MCF 10A (cell line): ENCODE measurements at regions of chr19 and their contacts with region 1.

Region 1: DNA sequence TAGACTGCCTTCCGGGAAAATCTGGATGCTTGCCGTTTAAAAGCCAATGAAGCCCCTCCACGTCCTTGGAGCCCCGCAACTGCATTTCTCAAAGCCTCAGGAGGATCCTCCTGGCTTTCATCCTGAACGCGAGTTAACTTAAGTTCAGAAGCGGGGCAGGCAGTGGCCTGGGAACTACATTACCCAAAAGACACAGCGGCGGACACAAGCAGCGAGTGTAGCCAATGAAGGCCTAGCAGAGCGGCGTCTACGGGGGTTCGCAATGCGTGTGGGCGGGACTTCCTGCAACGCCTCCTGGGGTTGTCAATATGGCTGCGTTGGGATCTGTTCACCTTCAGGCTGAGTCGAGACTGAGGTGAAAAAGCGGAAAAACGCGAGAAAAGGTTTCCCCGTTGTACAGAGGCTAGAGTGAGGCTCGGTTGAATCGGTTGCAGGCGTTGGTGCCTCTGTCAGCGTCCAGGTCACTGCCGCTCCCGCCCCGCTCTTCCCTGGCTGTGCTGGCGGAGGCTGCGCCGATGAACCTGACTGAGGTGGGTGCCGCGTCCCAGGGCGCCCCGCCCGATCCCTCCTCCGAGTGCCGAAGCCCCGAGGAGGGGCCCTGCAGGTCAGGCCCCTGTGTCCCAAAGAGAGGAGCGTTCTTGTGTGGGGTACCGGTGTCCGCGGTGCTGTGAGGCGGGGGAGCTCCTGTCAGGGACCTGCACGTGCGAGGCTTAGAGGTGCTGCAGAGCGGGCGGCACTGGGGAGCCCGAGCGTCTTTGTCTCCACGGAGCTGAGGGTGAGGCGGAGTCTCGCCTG is at the start of gene ZNF17:
- DNase-seq: peak; percentile 96
- H3K4me3 Mint-ChIP-seq: peak within 1 kb of the TSS; percentile 97
- H3K27ac Mint-ChIP-seq: peak within 1 kb of the TSS; percentile 86
- H3K4me1 Mint-ChIP-seq: peaks cover 14% of the 10 kb centered on the region
- H3K27me3 Mint-ChIP-seq: no peaks in the 10 kb centered on the region
- CTCF ChIP-seq: no peak
- total RNA-seq, gene ZNF17: 7.8 and 8.3 TPM in 2 replicates

Region 2: DNA sequence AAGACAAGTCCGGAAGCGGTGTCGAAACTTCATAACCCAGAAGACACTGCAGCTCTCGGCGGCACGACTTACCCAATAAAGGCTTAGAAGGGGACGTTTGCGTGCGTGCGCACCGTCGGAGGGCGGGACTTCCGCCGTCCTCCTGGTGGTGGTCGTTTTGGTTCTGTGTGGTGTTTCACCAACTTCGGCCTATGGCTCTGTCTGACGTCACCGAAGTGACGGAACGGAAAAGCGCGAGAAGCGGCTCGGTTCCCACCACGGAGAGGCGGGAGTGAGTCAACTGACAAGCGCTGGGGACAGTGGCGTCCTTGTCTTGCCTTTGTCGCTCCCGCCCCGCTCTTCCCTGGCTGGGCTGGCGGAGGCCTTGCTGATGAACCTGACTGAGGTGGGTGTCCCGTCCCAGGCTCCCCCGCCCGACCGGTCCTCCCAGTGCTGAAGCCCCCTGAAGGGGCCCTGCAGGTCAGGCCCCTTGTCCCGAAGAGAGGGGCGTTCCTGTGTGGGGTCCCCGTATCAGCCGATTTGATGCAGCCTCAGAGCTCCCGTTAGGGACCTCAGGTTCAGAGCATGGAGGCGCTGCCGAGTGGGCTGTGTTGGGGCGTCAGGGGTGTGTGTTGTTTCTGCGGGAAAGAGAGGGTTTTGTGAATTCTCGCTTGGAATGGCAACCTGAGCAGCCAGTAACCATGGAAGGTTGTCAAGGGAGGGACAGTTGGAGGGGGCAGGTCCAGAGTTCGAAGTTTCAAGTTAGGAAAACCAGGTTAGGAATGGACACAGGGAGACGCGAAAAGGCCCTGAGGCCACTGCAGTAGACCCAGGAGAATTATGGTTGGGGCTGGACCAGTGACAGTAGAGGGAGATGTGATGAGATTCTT is 21.1 kb before region 1 on chr19 and contains the start of gene ZNF548:
- CTCF ChIA-PET with region 1: interaction called, 18 read pairs
- POLR2A ChIA-PET with region 1: interaction called, 14 read pairs
- intact Hi-C with region 1: no loop called
- DNase-seq: peak; percentile 97
- H3K4me3 Mint-ChIP-seq: peak within 1 kb of the TSS; percentile 88
- H3K27ac Mint-ChIP-seq: peak within 1 kb of the TSS; percentile 97
- H3K4me1 Mint-ChIP-seq: peaks cover 13% of the 10 kb centered on the region
- H3K27me3 Mint-ChIP-seq: no peaks in the 10 kb centered on the region
- CTCF ChIP-seq: no peak
- total RNA-seq, gene ZNF548: 23.7 and 40.1 TPM in 2 replicates

Region 3: DNA sequence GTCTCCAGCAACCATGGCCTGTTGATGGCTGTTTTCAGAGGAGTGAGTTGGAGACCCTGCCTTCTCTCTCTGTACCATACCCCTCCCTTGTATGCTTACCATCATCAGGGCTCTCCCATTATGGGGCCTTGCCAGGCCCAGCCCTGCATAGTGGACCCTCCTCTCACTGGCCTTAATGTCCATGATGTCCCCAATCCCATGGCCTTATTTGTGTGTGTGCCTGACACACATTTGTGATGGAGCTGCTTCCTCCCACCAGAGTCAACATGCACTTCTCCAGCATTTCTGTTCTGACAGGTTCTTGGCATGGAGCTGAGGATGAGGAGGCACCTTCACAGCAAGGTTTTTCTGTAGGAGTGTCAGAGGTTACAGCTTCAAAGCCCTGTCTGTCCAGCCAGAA is 12.9 kb before region 1 on chr19:
- CTCF ChIA-PET with region 1: interaction called, 18 read pairs
- POLR2A ChIA-PET with region 1: interaction called, 3 read pairs
- intact Hi-C with region 1: no loop called
- DNase-seq: no peak
- H3K4me3 Mint-ChIP-seq: no peak overlapping the region
- H3K27ac Mint-ChIP-seq: no peak overlapping the region
- H3K4me1 Mint-ChIP-seq: no peaks in the 10 kb centered on the region
- H3K27me3 Mint-ChIP-seq: no peaks in the 10 kb centered on the region
- CTCF ChIP-seq: no peak

Region 4: DNA sequence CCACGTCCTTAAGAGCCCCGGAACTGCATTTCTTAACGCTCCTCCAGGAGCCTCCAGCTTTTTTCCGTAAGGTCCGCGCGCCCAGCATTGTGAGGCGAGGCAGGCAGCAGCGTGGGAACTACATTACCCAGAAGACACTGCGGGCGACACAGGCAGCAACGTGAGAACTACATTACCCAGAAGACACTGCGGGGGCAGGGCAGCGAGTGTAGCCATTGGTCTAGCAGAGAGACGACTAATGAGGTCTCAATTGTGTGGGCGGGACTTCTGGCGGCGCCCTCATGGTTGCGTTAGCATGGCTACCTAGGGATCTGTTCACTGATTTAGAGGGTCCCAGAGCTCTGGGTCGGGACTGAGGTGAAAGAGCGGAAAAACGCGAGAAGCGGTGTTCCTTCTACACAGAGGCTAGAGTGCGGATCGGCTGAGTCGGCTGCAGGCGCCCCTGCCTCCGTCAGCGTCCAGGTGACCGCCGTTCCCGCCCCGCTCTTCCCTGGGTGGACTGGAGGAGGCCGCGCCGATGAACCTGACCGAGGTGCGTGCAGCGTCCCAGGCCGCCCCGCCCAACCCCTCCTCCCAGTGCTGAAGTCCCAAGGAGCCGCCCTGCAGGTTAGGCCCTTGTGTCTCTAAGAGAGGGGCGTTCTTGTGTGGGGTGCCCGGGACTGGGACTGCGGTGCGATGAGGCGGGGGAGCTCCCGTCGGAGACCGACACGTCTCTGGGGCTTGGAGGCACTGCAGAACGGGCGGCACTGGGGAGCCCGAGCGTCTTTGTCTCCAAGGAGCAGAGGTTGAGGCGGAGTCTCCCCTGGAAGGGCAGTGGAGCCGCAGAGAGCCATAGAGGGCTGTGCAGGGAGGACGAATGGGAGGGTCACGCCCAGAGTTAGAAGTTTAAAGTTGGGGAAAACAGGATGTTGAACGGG is 24.2 kb after region 1 on chr19 and contains the start of gene ZNF749:
- CTCF ChIA-PET with region 1: interaction called, 9 read pairs
- POLR2A ChIA-PET with region 1: interaction called, 20 read pairs
- intact Hi-C with region 1: no loop called
- DNase-seq: peak; percentile 99
- H3K4me3 Mint-ChIP-seq: peak within 1 kb of the TSS; percentile 99
- H3K27ac Mint-ChIP-seq: peak within 1 kb of the TSS; percentile 93
- H3K4me1 Mint-ChIP-seq: peaks cover 29% of the 10 kb centered on the region
- H3K27me3 Mint-ChIP-seq: no peaks in the 10 kb centered on the region
- CTCF ChIP-seq: no peak
- total RNA-seq, gene ZNF749: 19.1 and 21.2 TPM in 2 replicates

Region 5: GRCh38 chr19:57512845-57513244 is 101.8 kb after region 1 on chr19:
- CTCF ChIA-PET with region 1: no interaction called
- POLR2A ChIA-PET with region 1: no interaction called
- intact Hi-C with region 1: no loop called
- DNase-seq: no peak
- H3K4me3 Mint-ChIP-seq: no peak overlapping the region
- H3K27ac Mint-ChIP-seq: no peak overlapping the region
- H3K4me1 Mint-ChIP-seq: no peaks in the 10 kb centered on the region
- H3K27me3 Mint-ChIP-seq: no peaks in the 10 kb centered on the region
- CTCF ChIP-seq: no peak

Region 6: GRCh38 chr19:57903618-57904184 is 492.6 kb after region 1 on chr19:
- CTCF ChIA-PET with region 1: interaction called, 11 read pairs
- POLR2A ChIA-PET with region 1: no interaction called
- intact Hi-C with region 1: no loop called
- DNase-seq: no peak
- H3K4me3 Mint-ChIP-seq: no peak overlapping the region
- H3K27ac Mint-ChIP-seq: no peak overlapping the region
- H3K4me1 Mint-ChIP-seq: no peaks in the 10 kb centered on the region
- H3K27me3 Mint-ChIP-seq: no peaks in the 10 kb centered on the region
- CTCF ChIP-seq: no peak

Region 7: GRCh38 chr19:58372311-58373133 is 961.4 kb after region 1 on chr19:
- CTCF ChIA-PET with region 1: no interaction called
- POLR2A ChIA-PET with region 1: no interaction called
- intact Hi-C with region 1: loop called (anchors 5 kb)
- DNase-seq: no peak
- H3K4me3 Mint-ChIP-seq: no peak overlapping the region
- H3K27ac Mint-ChIP-seq: no peak overlapping the region
- H3K4me1 Mint-ChIP-seq: no peaks in the 10 kb centered on the region
- H3K27me3 Mint-ChIP-seq: no peaks in the 10 kb centered on the region
- CTCF ChIP-seq: peak; percentile 9